Transverse colon (tissue), 4 donors: ENCODE measurements at regions of chr11 and their contacts with region 1.

Region 1: DNA sequence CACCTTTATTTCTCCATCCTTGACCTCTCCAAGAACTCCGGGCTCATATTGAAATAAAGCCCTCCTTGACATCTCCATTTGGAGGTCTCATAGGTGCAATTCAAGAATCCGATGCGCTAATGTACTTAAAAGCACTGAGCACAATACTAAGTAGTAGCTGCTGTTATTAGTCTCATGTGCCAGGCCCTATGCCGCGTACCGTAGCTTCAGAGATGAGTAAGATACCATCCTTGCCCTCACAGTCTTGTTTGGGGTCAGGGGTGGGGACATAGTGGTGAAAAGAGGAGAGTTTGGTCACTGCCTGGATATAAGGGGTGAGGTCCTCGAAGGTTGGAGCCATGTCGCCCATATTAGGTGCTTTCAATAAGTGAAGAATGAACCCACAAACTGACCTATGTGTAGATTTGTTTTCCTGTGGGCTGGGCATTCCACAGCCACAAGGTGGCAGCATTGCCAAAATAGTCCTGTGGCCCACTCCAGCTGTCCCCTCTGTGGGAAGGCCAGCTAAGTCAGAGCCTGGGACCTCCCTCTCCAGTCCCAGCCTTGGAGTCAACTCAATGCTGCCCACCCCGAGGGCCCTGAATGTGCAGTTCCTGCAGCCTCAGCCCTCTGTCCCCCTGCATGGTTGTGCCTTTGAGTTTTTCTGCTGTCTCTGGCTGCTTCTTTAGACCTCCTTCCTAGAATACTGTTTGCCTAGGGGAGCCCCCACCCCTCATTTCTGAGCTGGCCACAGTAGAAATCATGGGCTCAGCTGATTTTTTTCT is 6.5 kb downstream of the DCPS start:
- DNase-seq: peak; percentile 79
- H3K4me3 ChIP-seq: no peak overlapping the region
- H3K27ac ChIP-seq: no peak overlapping the region
- H3K4me1 ChIP-seq: peaks cover 0 to 28% (median 9%) of the 10 kb centered on the region in 4 donors
- H3K27me3 ChIP-seq: no peaks in the 10 kb centered on the region
- CTCF ChIP-seq: peak; percentile 76 to 90 (median 84)
- EP300 ChIP-seq: no peak
- POLR2A ChIP-seq: no peak

Region 2: DNA sequence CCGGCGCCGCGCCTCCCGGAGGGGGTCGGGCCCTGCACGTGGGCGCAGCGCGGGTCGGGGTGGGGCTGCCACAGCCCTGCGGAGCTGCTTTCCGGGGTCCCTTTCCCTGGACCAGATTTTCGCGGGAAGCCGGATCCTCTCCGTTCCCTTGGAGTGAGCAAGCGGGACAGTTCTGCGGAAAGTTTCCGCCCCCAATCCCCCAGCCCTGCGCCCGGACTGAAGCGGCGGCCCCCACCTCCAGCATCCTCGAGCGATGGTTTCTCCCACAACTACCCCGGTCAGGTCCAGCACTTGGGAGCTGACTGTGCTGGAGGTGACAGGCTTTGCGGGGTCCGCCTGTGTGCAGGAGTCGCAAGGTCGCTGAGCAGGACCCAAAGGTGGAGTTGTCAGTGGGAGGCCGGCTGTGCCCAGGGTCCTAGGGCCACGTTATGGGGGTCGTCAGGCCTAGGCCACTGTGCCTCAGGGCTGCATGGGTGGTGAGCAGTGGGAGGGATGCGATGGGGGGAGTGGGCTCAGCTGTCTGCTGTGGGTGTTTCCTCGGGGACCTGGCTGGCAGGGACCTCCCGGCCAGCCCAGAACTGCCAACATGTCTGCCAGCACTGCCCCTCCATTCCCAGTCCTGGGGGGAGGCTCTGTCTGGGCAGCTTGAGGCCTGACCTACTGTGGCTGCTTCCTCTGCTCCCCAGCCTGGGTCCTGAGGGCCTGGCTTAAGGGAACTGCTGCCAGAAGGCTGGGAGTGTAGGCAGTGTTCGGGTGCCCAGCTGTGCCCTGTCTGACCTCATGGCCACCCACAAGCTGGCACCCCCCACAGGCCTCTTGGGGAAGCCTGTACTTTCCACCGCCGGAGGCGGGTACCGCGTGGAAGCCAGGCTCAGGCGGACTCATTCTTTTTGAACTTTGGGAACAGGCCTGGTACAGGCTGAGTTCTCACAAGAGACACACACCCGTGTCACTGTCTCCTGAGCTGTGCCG is 45.8 kb after region 1 on chr11:
- in situ Hi-C with region 1: no loop called
- intact Hi-C with region 1: loop called (anchors 2 kb)
- DNase-seq: no peak
- H3K4me3 ChIP-seq: peak overlapping the region; percentile 36 to 67 (median 56)
- H3K27ac ChIP-seq: peak overlapping the region; percentile 80 to 87 (median 84)
- H3K4me1 ChIP-seq: peaks cover 5 to 73% (median 30%) of the 10 kb centered on the region in 4 donors
- H3K27me3 ChIP-seq: peaks cover 15% of the 10 kb centered on the region
- CTCF ChIP-seq: no peak
- EP300 ChIP-seq: no peak
- POLR2A ChIP-seq: no peak

Region 3: DNA sequence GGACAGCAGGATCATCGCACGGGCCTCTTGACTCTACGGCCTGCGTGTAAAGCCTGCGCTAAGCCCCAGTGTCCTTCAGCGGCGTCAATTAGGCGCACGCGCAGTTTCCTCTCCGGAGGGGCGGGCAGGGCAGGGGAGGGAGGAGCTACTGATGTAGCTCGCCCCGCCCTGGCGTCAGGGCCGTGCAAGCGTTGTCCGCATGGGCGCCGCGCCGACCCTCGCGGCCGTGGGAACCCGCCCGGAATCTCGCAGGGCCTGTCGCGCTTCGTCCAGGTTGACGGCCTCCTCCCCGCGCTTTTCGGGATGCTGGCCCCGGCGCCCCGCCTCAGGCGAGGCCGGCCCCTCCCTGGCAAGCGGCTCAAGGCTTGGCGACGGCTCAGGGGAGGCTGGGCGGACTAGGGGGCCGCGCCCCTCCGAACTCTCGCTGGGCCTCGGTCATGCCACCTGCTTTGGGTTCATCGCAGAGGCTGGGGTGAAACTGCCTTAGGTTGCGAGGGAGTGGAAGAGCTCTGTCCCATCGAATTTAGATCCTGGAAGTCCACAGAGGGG is 106.2 kb after region 1 on chr11:
- in situ Hi-C with region 1: loop called in 2 of 4 experiments (anchors 10 to 25 kb)
- intact Hi-C with region 1: no loop called
- DNase-seq: peak; percentile 90
- H3K4me3 ChIP-seq: peak overlapping the region; percentile 6 to 47 (median 39)
- H3K27ac ChIP-seq: peak overlapping the region; percentile 77 to 86 (median 82)
- H3K4me1 ChIP-seq: peaks cover 18 to 52% (median 36%) of the 10 kb centered on the region in 4 donors
- H3K27me3 ChIP-seq: no peaks in the 10 kb centered on the region
- CTCF ChIP-seq: no peak
- EP300 ChIP-seq: no peak
- POLR2A ChIP-seq: peak; percentile 38

Region 4: GRCh38 chr11:126431401-126432064 is 121.1 kb after region 1 on chr11:
- in situ Hi-C with region 1: no loop called
- intact Hi-C with region 1: loop called (anchors 10 kb)
- DNase-seq: peak; percentile 76
- H3K4me3 ChIP-seq: no peak overlapping the region
- H3K27ac ChIP-seq: peak overlapping the region; percentile 54 to 81 (median 76)
- H3K4me1 ChIP-seq: peaks cover 13 to 36% (median 16%) of the 10 kb centered on the region in 4 donors
- H3K27me3 ChIP-seq: no peaks in the 10 kb centered on the region
- CTCF ChIP-seq: no peak
- EP300 ChIP-seq: no peak
- POLR2A ChIP-seq: no peak

Region 5: GRCh38 chr11:126480410-126481302 is 170.2 kb after region 1 on chr11:
- in situ Hi-C with region 1: loop called in 2 of 4 experiments (anchors 10 to 25 kb)
- intact Hi-C with region 1: loop called (anchors 5 kb)
- DNase-seq: peak; percentile 83
- H3K4me3 ChIP-seq: no peak overlapping the region
- H3K27ac ChIP-seq: peak overlapping the region; percentile 47 to 73 (median 58)
- H3K4me1 ChIP-seq: peaks cover 5 to 15% (median 5%) of the 10 kb centered on the region in 4 donors
- H3K27me3 ChIP-seq: peaks cover 59% of the 10 kb centered on the region
- CTCF ChIP-seq: peak; percentile 92 to 96 (median 95)
- EP300 ChIP-seq: no peak
- POLR2A ChIP-seq: no peak